ENCODE measurements at regions of chrX and their contacts with region 1.

Region 1: DNA sequence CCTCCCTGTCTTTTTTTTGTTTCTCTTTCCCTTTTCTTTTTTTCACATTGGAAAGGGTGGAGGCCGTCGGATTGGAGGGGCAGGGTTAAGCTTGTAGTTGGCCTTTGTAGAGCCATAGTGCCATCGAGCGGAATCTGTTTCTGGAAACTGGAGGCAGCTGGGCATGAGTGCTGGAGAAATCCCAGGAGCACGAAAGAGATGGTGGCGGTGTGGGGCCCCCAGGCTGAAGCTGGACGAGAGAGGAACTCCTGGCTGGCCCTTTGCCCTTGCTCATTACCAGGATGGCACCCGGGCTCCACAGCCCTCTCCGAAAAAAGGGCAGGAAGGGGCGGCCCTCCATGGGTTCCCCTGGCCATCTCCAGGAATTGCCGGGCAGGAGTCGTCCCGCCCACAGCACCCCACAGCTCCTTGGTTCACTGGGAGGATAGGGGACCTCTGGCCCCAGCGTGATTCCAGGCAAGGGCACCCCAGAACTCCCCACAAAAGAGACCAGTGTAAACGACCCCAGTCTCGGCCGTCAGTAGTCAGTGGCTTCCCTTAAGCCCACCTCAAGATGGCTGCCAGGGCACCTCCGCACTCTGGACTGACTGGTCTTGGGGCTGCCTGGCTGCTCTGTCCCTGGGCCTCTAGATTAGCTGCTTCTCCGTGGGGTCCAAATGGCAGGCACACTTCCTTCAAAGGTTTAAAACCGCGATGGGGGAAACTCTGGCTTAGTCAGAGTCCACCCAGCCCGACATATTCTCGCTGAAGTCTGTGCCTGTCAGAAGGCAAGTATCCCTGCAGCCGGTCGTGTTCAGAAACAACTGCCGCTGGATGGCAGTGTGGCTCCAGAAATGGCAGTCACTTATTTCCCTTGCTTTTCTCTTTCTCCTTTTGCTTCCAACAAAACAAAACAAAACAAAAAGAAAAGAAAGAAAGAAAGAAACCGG is 74.1 kb downstream of the NBDY start:
- DNase-seq: peak; percentile 86 to 95 (median 91)
- H3K4me3 ChIP-seq: peak overlapping the region in 57 of 59 donors; percentile 15 to 85 (median 66)
- H3K27ac ChIP-seq: peak overlapping the region in 58 of 59 donors; percentile 82 to 100 (median 98)
- H3K27me3 ChIP-seq: no peaks in the 10 kb centered on the region
- CTCF ChIP-seq: peak; percentile 16 to 86 (median 73)

Region 2: GRCh38 chrX:55717521-55718497 is 1085.4 kb before region 1 on chrX and contains the start of gene RRAGB:
- intact Hi-C with region 1: loop called in 1 of 2 experiments (anchors 10 kb)
- DNase-seq: peak; percentile 86 to 97 (median 95)
- H3K4me3 ChIP-seq: peak within 1 kb of the TSS; percentile 46 to 84 (median 69)
- H3K27ac ChIP-seq: peak within 1 kb of the TSS in 58 of 59 donors; percentile 4 to 92 (median 80)
- H3K27me3 ChIP-seq: peaks cover 0 to 46% (median 6%) of the 10 kb centered on the region in 45 donors
- CTCF ChIP-seq: peak in 49 of 56 donors; percentile 9 to 53 (median 36)
- total RNA-seq, gene RRAGB: 22.0 to 53.4 (median 33.6) TPM

Region 3: GRCh38 chrX:56764153-56764974 is 38.8 kb before region 1 on chrX:
- intact Hi-C with region 1: no loop called
- DNase-seq: peak; percentile 53 to 89 (median 78)
- H3K4me3 ChIP-seq: peak overlapping the region in 56 of 59 donors; percentile 15 to 88 (median 64)
- H3K27ac ChIP-seq: peak overlapping the region; percentile 49 to 100 (median 99)
- H3K27me3 ChIP-seq: peaks cover 0 to 16% (median 0%) of the 10 kb centered on the region in 45 donors
- CTCF ChIP-seq: peak; percentile 13 to 86 (median 73)

Region 4: GRCh38 chrX:56978172-56978571 is 175.0 kb after region 1 on chrX:
- intact Hi-C with region 1: loop called in 1 of 2 experiments (anchors 2 kb)
- DNase-seq: peak in 1 of 10 donors; percentile 10
- H3K4me3 ChIP-seq: no peak overlapping the region
- H3K27ac ChIP-seq: no peak overlapping the region
- H3K27me3 ChIP-seq: peaks cover 0 to 54% (median 6%) of the 10 kb centered on the region in 45 donors
- CTCF ChIP-seq: peak; percentile 18 to 79 (median 64)

Region 5: DNA sequence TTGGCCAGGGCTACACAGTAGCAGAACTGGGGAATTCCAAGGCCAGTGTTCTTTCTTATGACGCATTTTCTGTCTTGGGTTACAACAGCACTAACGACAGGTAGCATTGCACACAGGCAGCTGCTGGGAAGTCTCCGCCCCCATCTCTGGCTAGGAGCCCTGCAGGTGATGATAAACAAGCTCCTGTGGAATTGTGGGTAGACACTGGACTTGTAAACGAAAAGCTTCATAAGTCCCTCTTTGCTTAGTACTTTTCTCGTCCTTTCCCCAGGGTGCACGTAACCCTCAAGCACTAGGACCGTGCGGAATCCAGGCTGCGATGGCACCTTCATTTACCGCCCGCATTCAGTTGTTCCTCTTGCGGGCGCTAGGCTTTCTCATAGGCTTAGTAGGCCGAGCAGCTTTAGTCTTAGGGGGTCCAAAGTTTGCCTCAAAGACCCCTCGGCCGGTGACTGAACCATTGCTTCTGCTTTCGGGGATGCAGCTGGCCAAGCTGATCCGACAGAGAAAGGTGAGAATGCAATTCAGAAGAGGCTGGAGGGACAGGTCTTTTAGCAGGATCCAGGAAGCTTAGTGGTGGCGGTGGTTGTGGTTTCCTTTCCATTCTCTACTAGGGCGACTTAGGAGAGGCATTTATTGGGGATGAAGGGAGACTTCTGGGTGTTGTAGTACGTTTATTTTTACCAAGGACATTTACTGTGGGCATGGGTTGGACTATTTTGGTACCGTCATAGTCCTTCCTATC is 483.5 kb after region 1 on chrX and contains the start of gene FAAH2:
- intact Hi-C with region 1: no loop called
- DNase-seq: peak in 1 of 10 donors; percentile 47
- H3K4me3 ChIP-seq: peak within 1 kb of the TSS in 37 of 59 donors; percentile 4 to 51 (median 28)
- H3K27ac ChIP-seq: no peak within 1 kb of the TSS
- H3K27me3 ChIP-seq: peaks cover 0 to 58% (median 8%) of the 10 kb centered on the region in 45 donors
- CTCF ChIP-seq: no peak
- total RNA-seq, gene FAAH2: 1.6 to 10.2 (median 4.0) TPM

Region 6: GRCh38 chrX:57445046-57445445 is 641.9 kb after region 1 on chrX:
- intact Hi-C with region 1: loop called in 1 of 2 experiments (anchors 10 kb)
- DNase-seq: no peak
- H3K4me3 ChIP-seq: no peak overlapping the region
- H3K27ac ChIP-seq: no peak overlapping the region
- H3K27me3 ChIP-seq: peaks cover 0 to 44% (median 9%) of the 10 kb centered on the region in 45 donors
- CTCF ChIP-seq: no peak

Region 7: GRCh38 chrX:57918750-57919436 is 1115.7 kb after region 1 on chrX:
- intact Hi-C with region 1: loop called in 1 of 2 experiments (anchors 10 kb)
- DNase-seq: no peak
- H3K4me3 ChIP-seq: peak overlapping the region in 38 of 59 donors; percentile 6 to 53 (median 31)
- H3K27ac ChIP-seq: no peak overlapping the region
- H3K27me3 ChIP-seq: peaks cover 0 to 73% (median 18%) of the 10 kb centered on the region in 45 donors
- CTCF ChIP-seq: peak in 55 of 56 donors; percentile 40 to 77 (median 60)

Measured in dorsolateral prefrontal cortex (tissue), 120 donors.